Body of pancreas (tissue), 4 donors: ENCODE measurements at regions of chr15 and their contacts with region 1.

Region 1: DNA sequence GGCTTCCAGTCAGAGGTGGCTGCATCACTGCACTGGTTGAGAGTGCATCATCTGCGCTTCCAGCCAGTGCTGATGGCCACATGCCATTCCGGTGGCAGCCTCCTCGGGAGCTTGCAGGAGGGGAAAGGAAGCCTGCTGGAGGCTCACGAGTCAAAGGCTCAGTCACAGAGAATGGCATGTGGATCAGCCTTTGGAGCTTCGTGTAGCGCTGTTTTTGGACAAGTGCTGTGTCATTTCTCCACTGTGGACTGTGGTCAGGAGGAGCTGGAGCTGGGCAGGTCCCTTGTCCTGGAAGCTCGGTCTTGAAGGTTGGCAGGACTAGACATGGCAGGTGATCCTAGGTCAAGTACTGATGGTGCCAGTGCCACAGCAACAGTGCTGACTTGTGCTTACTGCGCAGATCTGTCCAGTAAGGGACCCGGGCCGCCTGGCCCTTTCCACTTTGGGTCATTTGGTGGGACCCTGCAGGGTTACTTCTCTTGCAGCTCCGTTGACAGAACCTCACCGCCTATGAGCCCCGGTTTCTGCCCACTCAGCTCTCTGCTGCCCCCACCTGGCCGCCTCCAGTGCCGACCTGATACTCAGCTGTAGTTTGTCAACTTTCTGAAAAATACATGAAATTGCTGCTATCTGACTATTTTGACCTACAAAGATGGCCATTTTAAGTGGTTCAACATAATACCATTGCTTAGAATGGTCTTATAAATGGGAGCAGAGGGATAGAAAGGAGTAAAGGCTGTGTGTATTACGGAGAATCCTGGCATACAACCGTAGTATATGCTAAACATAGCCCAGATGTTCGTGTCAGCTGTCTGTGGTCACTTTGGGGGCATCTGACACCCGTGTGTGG is 27.6 kb upstream of the TRPM1 start:
- DNase-seq: peak; percentile 76 to 82 (median 80)
- ATAC-seq: peak; percentile 81
- H3K4me3 ChIP-seq: no peak overlapping the region
- H3K27ac ChIP-seq: no peak overlapping the region
- H3K4me1 ChIP-seq: peaks cover 4% of the 10 kb centered on the region
- H3K27me3 ChIP-seq: no peaks in the 10 kb centered on the region
- CTCF ChIP-seq: peak; percentile 82 to 96 (median 89)
- POLR2A ChIP-seq: no peak

Region 2: GRCh38 chr15:30962079-30962478 is 167.1 kb before region 1 on chr15:
- intact Hi-C with region 1: loop called (anchors 10 kb)
- DNase-seq: no peak
- ATAC-seq: no peak
- H3K4me3 ChIP-seq: no peak overlapping the region
- H3K27ac ChIP-seq: no peak overlapping the region
- H3K4me1 ChIP-seq: no peaks in the 10 kb centered on the region
- H3K27me3 ChIP-seq: no peaks in the 10 kb centered on the region
- CTCF ChIP-seq: no peak
- POLR2A ChIP-seq: no peak